ENCODE measurements at regions of chr12 and their contacts with region 1.

Region 1: GRCh38 chr12:3988519-3989448 is 115.6 kb upstream of the PARP11 start:
- DNase-seq: peak; percentile 57
- ATAC-seq: peak; percentile 90
- H3K4me3 Mint-ChIP-seq: peak overlapping the region; percentile 57
- H3K27ac Mint-ChIP-seq: peak overlapping the region; percentile 87
- H3K4me1 Mint-ChIP-seq: peaks cover 19% of the 10 kb centered on the region
- H3K27me3 Mint-ChIP-seq: no peaks in the 10 kb centered on the region

Region 2: GRCh38 chr12:3896801-3897331 is 91.9 kb before region 1 on chr12:
- POLR2A ChIA-PET with region 1: interaction called, 12 read pairs
- DNase-seq: no peak
- ATAC-seq: peak; percentile 54
- H3K4me3 Mint-ChIP-seq: peak overlapping the region; percentile 62
- H3K27ac Mint-ChIP-seq: peak overlapping the region; percentile 91
- H3K4me1 Mint-ChIP-seq: peaks cover 31% of the 10 kb centered on the region
- H3K27me3 Mint-ChIP-seq: no peaks in the 10 kb centered on the region

Region 3: DNA sequence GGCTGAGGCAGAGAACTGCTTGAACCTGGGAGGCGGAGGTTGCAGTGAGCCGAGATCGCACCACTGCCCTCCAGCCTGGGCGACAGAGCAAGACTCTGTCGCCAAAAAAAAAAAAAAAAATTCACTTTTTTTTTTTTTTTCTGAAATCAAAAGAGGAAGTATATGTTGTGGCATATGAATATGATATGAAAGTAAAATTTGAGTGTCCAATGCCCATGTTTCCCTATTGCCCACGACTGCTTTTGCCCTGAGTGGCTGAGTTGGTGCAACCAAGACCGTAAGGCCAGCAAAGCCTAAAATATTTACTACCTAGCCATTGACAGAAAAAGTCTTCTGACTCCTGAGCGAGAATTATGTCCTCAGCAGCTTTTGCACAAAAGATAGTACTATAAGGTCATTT is 13.9 kb before region 1 on chr12:
- POLR2A ChIA-PET with region 1: interaction called, 13 read pairs
- DNase-seq: no peak
- ATAC-seq: no peak
- H3K4me3 Mint-ChIP-seq: peak overlapping the region; percentile 52
- H3K27ac Mint-ChIP-seq: peak overlapping the region; percentile 80
- H3K4me1 Mint-ChIP-seq: peaks cover 53% of the 10 kb centered on the region
- H3K27me3 Mint-ChIP-seq: no peaks in the 10 kb centered on the region